CD8-positive, alpha-beta T cell (primary cell): ENCODE measurements at regions of chr7 and their contacts with region 1.

Region 1: DNA sequence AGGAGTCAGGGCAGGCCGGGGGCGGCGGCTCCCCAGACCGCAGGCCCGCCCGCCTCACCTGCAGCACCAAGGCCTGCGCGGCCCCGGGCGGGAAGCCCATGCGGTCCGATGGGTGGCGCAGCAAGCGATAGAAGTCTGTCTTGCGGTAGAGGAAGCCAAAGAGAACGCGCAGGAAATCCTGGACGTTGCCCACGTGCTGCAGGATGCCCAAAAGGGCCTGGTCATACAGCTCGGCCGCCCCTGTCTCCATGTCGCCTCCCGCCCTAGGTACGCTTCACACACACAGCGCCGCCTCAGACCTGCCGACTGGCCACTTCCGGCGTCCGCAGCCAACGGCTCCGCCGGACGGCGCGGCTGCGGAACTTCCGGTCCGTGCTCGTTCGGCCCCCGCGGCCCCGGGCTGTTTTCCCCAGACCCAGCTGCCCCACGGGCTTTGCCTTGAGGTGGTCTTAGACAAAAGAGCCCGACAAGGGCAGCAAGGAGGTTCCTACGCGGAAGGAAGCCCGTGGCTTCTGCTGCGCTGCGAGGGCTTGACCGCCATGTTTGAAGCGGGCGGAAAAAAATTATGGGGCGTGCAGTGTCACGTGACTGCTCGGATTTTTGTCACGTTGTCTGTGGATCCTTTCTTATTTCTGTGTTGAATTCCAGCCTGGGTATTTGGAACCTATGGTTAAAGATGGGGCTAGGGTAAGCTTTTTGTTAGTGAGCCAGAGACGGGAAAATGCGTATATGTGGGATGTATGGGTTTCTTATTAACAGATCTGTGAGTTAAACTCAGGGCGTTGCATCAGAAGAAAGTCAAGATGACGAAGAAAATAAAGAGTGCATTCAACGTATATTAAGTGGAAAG is at the start of gene NUDCD3:
- DNase-seq: peak; percentile 63 to 91 (median 82)
- ATAC-seq: peak; percentile 67
- H3K4me3 ChIP-seq: peak within 1 kb of the TSS; percentile 77 to 97
- H3K4me3 Mint-ChIP-seq: peak within 1 kb of the TSS; percentile 88
- H3K27ac ChIP-seq: peak within 1 kb of the TSS; percentile 95 to 100
- H3K27ac Mint-ChIP-seq: peak within 1 kb of the TSS; percentile 97
- H3K4me1 ChIP-seq: peaks cover 42% of the 10 kb centered on the region
- H3K4me1 Mint-ChIP-seq: peaks cover 47% of the 10 kb centered on the region
- H3K27me3 ChIP-seq: no peaks in the 10 kb centered on the region
- H3K27me3 Mint-ChIP-seq: peaks cover 2% of the 10 kb centered on the region
- CTCF ChIP-seq: no peak
- total RNA-seq, gene NUDCD3: 40.6 to 45.9 TPM

Region 2: DNA sequence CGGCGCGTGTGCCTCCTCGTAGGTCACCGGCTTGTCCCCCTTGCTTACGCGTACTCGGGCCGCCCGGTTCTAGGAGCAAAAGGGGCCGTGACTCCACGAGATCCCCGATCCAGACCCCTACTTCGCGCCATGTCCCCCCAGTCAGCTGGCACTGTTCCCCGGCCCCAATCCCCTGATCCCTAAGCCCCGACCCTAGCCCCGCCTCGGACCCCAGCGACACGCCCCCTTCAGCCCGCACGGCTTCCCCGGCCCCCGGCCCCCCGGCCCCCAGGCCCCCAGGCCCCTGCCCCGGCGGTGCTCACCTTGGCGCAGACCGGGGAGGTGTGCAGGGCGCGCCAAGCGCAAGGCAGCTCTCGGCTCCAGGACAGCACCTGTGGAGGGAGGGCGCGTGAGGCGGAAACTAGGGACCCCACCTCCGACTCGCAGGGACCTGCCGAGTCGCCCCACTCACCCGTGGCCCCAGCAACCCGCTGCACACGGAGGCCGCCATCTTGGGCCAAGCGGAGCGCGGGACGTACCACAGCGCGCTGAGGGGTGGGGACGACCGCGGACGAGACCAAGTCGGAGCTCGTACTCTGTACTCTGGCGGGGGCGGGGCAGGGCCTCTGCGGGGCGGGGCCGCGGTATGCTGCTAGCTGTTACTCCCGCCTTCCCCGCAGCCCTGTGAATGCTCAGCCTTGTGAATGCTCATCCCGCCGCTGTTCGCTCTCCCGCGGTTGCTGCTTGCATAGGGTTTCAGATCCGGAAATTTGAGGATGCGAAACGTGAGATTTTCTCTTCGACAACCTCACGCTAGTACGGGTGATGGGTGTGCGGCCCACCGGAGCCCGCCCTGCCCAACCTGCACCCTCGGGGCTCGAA is 621.3 kb before region 1 on chr7 and contains the start of gene MRPS24:
- CTCF ChIA-PET with region 1: no interaction called
- POLR2A ChIA-PET with region 1: no interaction called
- intact Hi-C with region 1: loop called in 1 of 2 experiments (anchors 2 kb)
- DNase-seq: peak; percentile 91 to 97 (median 95)
- ATAC-seq: peak; percentile 100
- H3K4me3 ChIP-seq: peak within 1 kb of the TSS; percentile 69 to 76
- H3K4me3 Mint-ChIP-seq: peak within 1 kb of the TSS; percentile 94
- H3K27ac ChIP-seq: peak within 1 kb of the TSS; percentile 50 to 69
- H3K27ac Mint-ChIP-seq: peak within 1 kb of the TSS; percentile 93
- H3K4me1 ChIP-seq: peaks cover 14% of the 10 kb centered on the region
- H3K4me1 Mint-ChIP-seq: peaks cover 23% of the 10 kb centered on the region
- H3K27me3 ChIP-seq: no peaks in the 10 kb centered on the region
- H3K27me3 Mint-ChIP-seq: no peaks in the 10 kb centered on the region
- CTCF ChIP-seq: no peak
- total RNA-seq, gene MRPS24: 61.7 to 74.4 TPM

Region 3: DNA sequence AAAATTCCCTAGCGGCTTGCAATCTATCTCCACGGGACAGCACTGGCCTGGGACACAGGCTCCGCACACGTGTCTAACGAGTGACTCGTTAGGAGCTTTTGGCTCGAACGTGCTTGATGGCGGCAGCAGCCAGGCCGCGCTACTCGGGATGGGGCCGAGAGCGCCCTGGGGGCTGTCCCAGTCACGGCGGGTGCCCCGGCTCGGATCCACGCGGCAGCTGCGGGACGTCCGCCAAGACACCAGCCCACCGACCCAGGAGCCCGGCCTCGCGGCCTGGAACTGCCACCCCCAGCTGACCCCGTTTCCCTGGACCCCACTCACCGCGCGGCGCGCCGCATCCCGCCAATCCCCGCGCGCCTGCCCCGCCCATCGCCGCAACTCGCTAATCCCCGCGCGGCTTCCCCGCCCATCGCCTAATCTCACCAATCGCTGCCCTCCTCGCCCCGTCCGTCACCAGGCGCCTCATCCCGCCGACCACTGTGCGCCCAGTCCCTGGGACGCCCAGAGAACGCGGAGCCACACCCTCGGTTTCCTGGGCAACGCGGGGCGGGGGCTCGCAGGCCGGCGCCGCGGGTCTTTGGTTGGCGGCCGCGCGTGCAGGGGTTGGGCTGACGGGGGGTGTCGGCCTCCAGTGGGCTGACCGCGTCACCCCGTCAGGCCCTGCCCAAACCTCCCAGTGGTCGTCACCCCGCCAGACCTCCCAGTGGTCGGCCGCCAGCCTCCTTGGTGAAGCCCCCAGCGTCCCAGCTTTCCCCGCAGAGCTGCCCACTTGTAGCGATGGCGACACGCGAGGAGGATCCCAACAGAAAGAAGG is 367.2 kb before region 1 on chr7 and contains the start of gene POLD2:
- CTCF ChIA-PET with region 1: no interaction called
- POLR2A ChIA-PET with region 1: no interaction called
- intact Hi-C with region 1: loop called (anchors 1 to 2 kb)
- DNase-seq: peak; percentile 93 to 98 (median 97)
- ATAC-seq: peak; percentile 98
- H3K4me3 ChIP-seq: peak within 1 kb of the TSS; percentile 78 to 83
- H3K4me3 Mint-ChIP-seq: peak within 1 kb of the TSS; percentile 93
- H3K27ac ChIP-seq: peak within 1 kb of the TSS; percentile 75 to 79
- H3K27ac Mint-ChIP-seq: peak within 1 kb of the TSS; percentile 66
- H3K4me1 ChIP-seq: peaks cover 12% of the 10 kb centered on the region
- H3K4me1 Mint-ChIP-seq: peaks cover 34% of the 10 kb centered on the region
- H3K27me3 ChIP-seq: no peaks in the 10 kb centered on the region
- H3K27me3 Mint-ChIP-seq: no peaks in the 10 kb centered on the region
- CTCF ChIP-seq: no peak
- total RNA-seq, gene POLD2: 44.0 to 48.9 TPM

Region 4: GRCh38 chr7:44218418-44219201 is 272.0 kb before region 1 on chr7:
- CTCF ChIA-PET with region 1: no interaction called
- POLR2A ChIA-PET with region 1: no interaction called
- intact Hi-C with region 1: no loop called
- DNase-seq: no peak
- ATAC-seq: no peak
- H3K4me3 ChIP-seq: no peak overlapping the region
- H3K4me3 Mint-ChIP-seq: no peak overlapping the region
- H3K27ac ChIP-seq: no peak overlapping the region
- H3K27ac Mint-ChIP-seq: no peak overlapping the region
- H3K4me1 ChIP-seq: no peaks in the 10 kb centered on the region
- H3K4me1 Mint-ChIP-seq: no peaks in the 10 kb centered on the region
- H3K27me3 ChIP-seq: no peaks in the 10 kb centered on the region
- H3K27me3 Mint-ChIP-seq: peaks cover 1% of the 10 kb centered on the region
- CTCF ChIP-seq: no peak

Region 5: DNA sequence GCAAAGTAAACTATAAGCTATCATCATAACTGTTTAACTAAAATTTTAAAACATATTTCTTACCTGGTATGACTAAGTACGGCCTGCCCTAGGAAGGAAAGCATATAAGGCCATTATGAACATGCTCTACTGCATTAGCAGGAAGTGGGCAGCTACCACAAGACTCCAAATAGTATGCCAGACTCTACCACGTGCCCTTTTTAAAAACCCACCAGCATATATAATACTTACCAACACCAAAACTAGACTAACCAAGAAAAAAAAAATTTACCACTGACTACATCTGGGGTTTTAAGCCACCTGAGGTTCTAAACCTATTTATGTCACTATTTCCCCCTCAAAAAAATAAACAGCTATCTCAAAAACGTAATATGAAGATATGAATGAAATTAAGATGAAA is 30.3 kb before region 1 on chr7:
- CTCF ChIA-PET with region 1: no interaction called
- POLR2A ChIA-PET with region 1: interaction called, 23 read pairs
- intact Hi-C with region 1: loop called (anchors 1 kb)
- DNase-seq: peak; percentile 13 to 92 (median 62)
- ATAC-seq: peak; percentile 95
- H3K4me3 ChIP-seq: peak overlapping the region in 1 of 2 experiments; percentile 5
- H3K4me3 Mint-ChIP-seq: peak overlapping the region; percentile 33
- H3K27ac ChIP-seq: peak overlapping the region in 1 of 2 experiments; percentile 4
- H3K27ac Mint-ChIP-seq: peak overlapping the region; percentile 68
- H3K4me1 ChIP-seq: peaks cover 58% of the 10 kb centered on the region
- H3K4me1 Mint-ChIP-seq: peaks cover 76% of the 10 kb centered on the region
- H3K27me3 ChIP-seq: no peaks in the 10 kb centered on the region
- H3K27me3 Mint-ChIP-seq: no peaks in the 10 kb centered on the region
- CTCF ChIP-seq: no peak

Region 6: DNA sequence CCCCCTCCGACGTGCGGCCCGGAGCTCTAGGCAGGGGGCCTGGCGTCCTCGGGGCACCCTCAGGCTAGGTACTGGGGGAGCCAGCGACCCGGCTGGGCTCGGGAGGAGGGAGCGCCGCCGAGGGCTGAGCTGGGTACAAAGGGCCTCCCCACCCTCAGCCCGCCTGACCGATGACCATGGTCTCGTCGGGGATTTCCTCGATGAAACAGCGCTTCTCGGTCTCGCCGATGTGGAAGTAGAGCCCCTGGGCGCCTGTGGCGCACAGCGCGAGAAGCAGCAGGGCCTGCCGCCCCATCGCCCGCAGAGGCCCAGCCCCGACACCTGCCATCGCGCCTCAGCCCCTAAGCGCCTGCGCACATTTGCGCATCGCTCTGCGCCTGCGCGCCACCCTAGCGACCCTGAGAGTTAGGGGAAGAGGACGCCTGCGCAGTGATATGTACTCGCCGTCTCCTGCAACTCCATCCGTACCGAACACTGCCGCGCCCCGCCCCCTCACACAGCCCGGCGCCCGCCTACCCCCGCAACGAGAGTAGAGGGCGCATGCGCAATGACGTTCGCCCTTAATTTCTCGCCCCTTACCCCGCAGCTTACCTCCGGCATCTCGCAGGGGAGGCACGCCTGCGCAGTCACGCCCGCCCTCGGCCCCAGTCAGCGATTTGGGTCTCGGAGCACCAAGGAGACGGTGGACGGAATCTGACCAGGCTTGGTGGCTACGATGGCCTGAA is 91.5 kb after region 1 on chr7 and contains the start of gene TMED4:
- CTCF ChIA-PET with region 1: no interaction called
- POLR2A ChIA-PET with region 1: interaction called, 18 read pairs
- intact Hi-C with region 1: loop called in 1 of 2 experiments (anchors 2 kb)
- DNase-seq: peak; percentile 100
- ATAC-seq: peak; percentile 93
- H3K4me3 ChIP-seq: peak within 1 kb of the TSS; percentile 76 to 79
- H3K4me3 Mint-ChIP-seq: peak within 1 kb of the TSS; percentile 93
- H3K27ac ChIP-seq: peak within 1 kb of the TSS; percentile 92 to 96
- H3K27ac Mint-ChIP-seq: peak within 1 kb of the TSS; percentile 98
- H3K4me1 ChIP-seq: peaks cover 26% of the 10 kb centered on the region
- H3K4me1 Mint-ChIP-seq: peaks cover 33% of the 10 kb centered on the region
- H3K27me3 ChIP-seq: no peaks in the 10 kb centered on the region
- H3K27me3 Mint-ChIP-seq: no peaks in the 10 kb centered on the region
- CTCF ChIP-seq: no peak
- total RNA-seq, gene TMED4: 115 to 120 TPM

Region 7: GRCh38 chr7:44797329-44798251 is 307.0 kb after region 1 on chr7:
- CTCF ChIA-PET with region 1: no interaction called
- POLR2A ChIA-PET with region 1: interaction called, 7 read pairs
- intact Hi-C with region 1: loop called in 1 of 2 experiments (anchors 1 kb)
- DNase-seq: peak; percentile 64 to 92 (median 82)
- ATAC-seq: peak; percentile 61
- H3K4me3 ChIP-seq: peak overlapping the region; percentile 97 to 98
- H3K4me3 Mint-ChIP-seq: peak overlapping the region; percentile 92
- H3K27ac ChIP-seq: peak overlapping the region; percentile 97 to 99
- H3K27ac Mint-ChIP-seq: peak overlapping the region; percentile 96
- H3K4me1 ChIP-seq: peaks cover 22% of the 10 kb centered on the region
- H3K4me1 Mint-ChIP-seq: peaks cover 44% of the 10 kb centered on the region
- H3K27me3 ChIP-seq: no peaks in the 10 kb centered on the region
- H3K27me3 Mint-ChIP-seq: no peaks in the 10 kb centered on the region
- CTCF ChIP-seq: no peak